OCI-LY7 (cell line): ENCODE measurements at regions of chr2 and their contacts with region 1.

Region 1: GRCh38 chr2:126749537-126749936 is 93.6 kb downstream of the GYPC start:
- DNase-seq: peak; percentile 51
- H3K4me3 ChIP-seq: no peak overlapping the region
- H3K27ac ChIP-seq: no peak overlapping the region
- H3K4me1 ChIP-seq: no peaks in the 10 kb centered on the region
- CTCF ChIP-seq: peak; percentile 72

Region 2: GRCh38 chr2:126527836-126528507 is 221.6 kb before region 1 on chr2:
- CTCF ChIA-PET with region 1: no interaction called
- POLR2A ChIA-PET with region 1: no interaction called
- intact Hi-C with region 1: loop called (anchors 1 kb)
- DNase-seq: peak; percentile 65
- H3K4me3 ChIP-seq: no peak overlapping the region
- H3K27ac ChIP-seq: no peak overlapping the region
- H3K4me1 ChIP-seq: no peaks in the 10 kb centered on the region
- CTCF ChIP-seq: peak; percentile 84

Region 3: GRCh38 chr2:127324635-127325034 is 575.1 kb after region 1 on chr2:
- CTCF ChIA-PET with region 1: no interaction called
- POLR2A ChIA-PET with region 1: no interaction called
- intact Hi-C with region 1: no loop called
- DNase-seq: peak; percentile 55
- H3K4me3 ChIP-seq: no peak overlapping the region
- H3K27ac ChIP-seq: no peak overlapping the region
- H3K4me1 ChIP-seq: no peaks in the 10 kb centered on the region
- CTCF ChIP-seq: peak; percentile 95